ENCODE measurements at regions of chr5 and their contacts with region 1.

Region 1: GRCh38 chr5:115841382-115842088 is at the starts of genes AP3S1 and ATG12:
- DNase-seq: peak; percentile 95
- H3K4me3 ChIP-seq: peak within 1 kb of the TSS; percentile 66 to 90 (median 67)
- H3K27ac ChIP-seq: peak within 1 kb of the TSS; percentile 86
- H3K4me1 ChIP-seq: peaks cover 41% of the 10 kb centered on the region
- H3K27me3 ChIP-seq: no peaks in the 10 kb centered on the region
- CTCF ChIP-seq: no peak
- POLR2A ChIP-seq: peak; percentile 91
- total RNA-seq, gene AP3S1: 81.2 and 85.7 TPM in 2 replicates
- total RNA-seq, gene ATG12: 50.3 and 62.0 TPM in 2 replicates

Region 2: GRCh38 chr5:115169487-115170133 is 671.9 kb before region 1 on chr5 and contains the start of gene TRIM36:
- CTCF ChIA-PET with region 1: no interaction called
- POLR2A ChIA-PET with region 1: no interaction called
- dilution Hi-C with region 1: no loop called
- intact Hi-C with region 1: loop called (anchors 10 kb)
- DNase-seq: peak; percentile 90
- H3K4me3 ChIP-seq: peak within 1 kb of the TSS; percentile 14 to 61 (median 24)
- H3K27ac ChIP-seq: no peak within 1 kb of the TSS
- H3K4me1 ChIP-seq: peaks cover 11% of the 10 kb centered on the region
- H3K27me3 ChIP-seq: peaks cover 22 to 50% of the 10 kb centered on the region in 2 experiments
- CTCF ChIP-seq: peak in 1 of 2 donors; percentile 24
- POLR2A ChIP-seq: no peak
- total RNA-seq, gene TRIM36: 0.69 and 1.2 TPM in 2 replicates

Region 3: DNA sequence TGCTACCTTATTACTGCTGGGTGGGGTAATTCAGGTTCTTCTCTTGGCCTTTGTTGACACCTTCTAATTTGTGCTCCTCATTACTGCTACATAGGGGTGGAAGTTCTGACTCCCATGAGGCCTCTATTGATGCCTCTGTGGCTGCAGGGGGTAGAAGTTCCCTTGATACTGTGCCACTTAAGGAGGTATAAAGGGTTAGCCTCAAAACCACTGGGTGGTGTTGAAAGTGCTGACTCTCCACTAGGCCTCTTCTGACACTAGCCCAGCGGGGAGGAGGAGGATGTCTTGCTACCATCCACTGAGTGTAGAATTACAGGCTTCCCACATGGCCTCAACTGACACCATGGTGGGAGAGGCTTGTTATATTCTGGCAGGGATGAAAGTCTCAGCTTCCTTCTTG is 508.4 kb before region 1 on chr5:
- CTCF ChIA-PET with region 1: no interaction called
- POLR2A ChIA-PET with region 1: no interaction called
- dilution Hi-C with region 1: no loop called
- intact Hi-C with region 1: no loop called
- DNase-seq: no peak
- H3K4me3 ChIP-seq: no peak overlapping the region
- H3K27ac ChIP-seq: no peak overlapping the region
- H3K4me1 ChIP-seq: no peaks in the 10 kb centered on the region
- H3K27me3 ChIP-seq: no peaks in the 10 kb centered on the region
- CTCF ChIP-seq: no peak
- POLR2A ChIP-seq: no peak

Region 4: DNA sequence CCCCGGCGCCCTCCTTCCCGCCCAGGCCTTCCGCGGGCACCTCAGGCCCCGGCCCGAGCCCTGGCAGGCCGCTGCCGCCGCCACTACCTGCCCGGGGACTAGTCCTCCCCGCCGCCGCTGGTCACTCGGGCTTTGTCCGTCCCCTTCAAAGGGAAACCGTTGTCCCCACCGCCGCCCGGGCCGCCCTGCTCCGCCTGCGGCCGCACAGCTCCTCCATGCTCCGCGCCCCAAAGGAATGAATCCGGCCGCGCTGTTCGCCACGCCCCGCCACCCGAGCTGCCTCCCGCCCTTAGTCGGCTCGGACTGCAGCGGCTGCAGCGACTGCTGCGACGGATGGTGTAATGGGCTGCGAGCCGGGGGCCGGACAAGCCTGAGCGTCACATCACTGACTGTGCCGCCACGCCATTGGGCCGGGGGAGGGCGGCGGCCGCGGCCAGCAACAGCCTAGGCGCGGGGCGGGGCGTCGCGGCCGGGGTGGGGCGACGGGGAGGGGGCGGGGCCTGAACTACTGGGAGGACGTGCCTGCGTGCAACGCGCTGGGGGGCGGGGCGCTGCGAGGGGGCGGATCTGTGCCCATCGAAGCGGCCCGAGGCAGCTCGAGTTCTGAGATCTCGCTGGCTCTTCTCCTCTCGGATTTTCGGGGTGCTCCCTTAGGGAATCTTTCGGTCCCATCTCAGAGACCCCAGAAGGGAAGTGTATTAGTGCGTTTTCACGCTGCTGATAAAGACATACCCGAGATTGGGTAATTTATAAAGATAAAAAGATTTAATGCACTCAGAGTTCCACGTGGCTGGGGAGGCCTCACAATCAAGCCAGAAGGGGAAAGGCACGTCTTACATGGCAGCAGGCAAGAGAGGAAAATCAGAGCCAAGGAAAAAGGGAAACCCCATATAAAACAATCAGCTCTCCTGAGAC is 296.8 kb before region 1 on chr5 and contains the start of gene FEM1C:
- CTCF ChIA-PET with region 1: no interaction called
- POLR2A ChIA-PET with region 1: no interaction called
- dilution Hi-C with region 1: no loop called
- intact Hi-C with region 1: loop called (anchors 5 kb)
- DNase-seq: peak; percentile 98
- H3K4me3 ChIP-seq: peak within 1 kb of the TSS; percentile 90 to 99 (median 97)
- H3K27ac ChIP-seq: peak within 1 kb of the TSS; percentile 89
- H3K4me1 ChIP-seq: peaks cover 25% of the 10 kb centered on the region
- H3K27me3 ChIP-seq: no peaks in the 10 kb centered on the region
- CTCF ChIP-seq: no peak
- POLR2A ChIP-seq: peak; percentile 92
- total RNA-seq, gene FEM1C: 16.0 and 16.7 TPM in 2 replicates

Region 5: GRCh38 chr5:115816226-115817081 is 25.1 kb before region 1 on chr5 and contains the start of gene CDO1:
- CTCF ChIA-PET with region 1: interaction called, 4 read pairs
- POLR2A ChIA-PET with region 1: interaction called, 4 read pairs
- dilution Hi-C with region 1: no loop called
- intact Hi-C with region 1: loop called (anchors 2 kb)
- DNase-seq: peak; percentile 53
- H3K4me3 ChIP-seq: peak within 1 kb of the TSS; percentile 6 to 40 (median 24)
- H3K27ac ChIP-seq: no peak within 1 kb of the TSS
- H3K4me1 ChIP-seq: peaks cover 6% of the 10 kb centered on the region
- H3K27me3 ChIP-seq: peaks cover 27 to 38% of the 10 kb centered on the region in 2 experiments
- CTCF ChIP-seq: no peak
- POLR2A ChIP-seq: no peak
- total RNA-seq, gene CDO1: 1.3 and 1.7 TPM in 2 replicates

Region 6: GRCh38 chr5:115962503-115963402 is 121.2 kb after region 1 on chr5:
- CTCF ChIA-PET with region 1: no interaction called
- POLR2A ChIA-PET with region 1: no interaction called
- dilution Hi-C with region 1: no loop called
- intact Hi-C with region 1: loop called (anchors 5 kb)
- DNase-seq: peak; percentile 43
- H3K4me3 ChIP-seq: peak overlapping the region; percentile 12 to 48 (median 32)
- H3K27ac ChIP-seq: no peak overlapping the region
- H3K4me1 ChIP-seq: peaks cover 11% of the 10 kb centered on the region
- H3K27me3 ChIP-seq: peaks cover 3 to 40% of the 10 kb centered on the region in 2 experiments
- CTCF ChIP-seq: peak in 1 of 2 donors; percentile 9
- POLR2A ChIP-seq: no peak

Region 7: DNA sequence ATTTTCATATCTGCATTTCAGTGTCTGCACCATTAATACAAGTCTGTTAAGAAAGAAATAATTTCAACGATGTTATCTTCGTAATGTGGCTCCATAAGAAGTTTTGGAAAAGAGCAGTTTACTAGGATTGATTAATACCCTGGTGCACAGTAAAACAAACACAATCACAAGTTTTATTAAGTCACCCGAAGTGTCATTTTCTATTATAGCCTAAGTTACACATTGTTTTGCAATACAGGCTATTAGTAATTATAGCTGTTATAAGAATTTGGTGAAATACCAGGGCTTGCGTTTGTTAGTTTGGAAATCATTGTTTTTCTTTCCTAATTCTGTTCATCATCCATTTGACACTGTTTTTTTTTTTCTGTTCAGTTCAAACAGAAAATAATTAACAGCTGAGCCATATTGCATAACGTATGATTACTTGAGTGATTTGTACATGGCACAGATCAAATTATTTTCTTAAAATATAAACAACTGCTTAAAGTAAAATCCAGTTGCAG is 151.4 kb after region 1 on chr5:
- CTCF ChIA-PET with region 1: no interaction called
- POLR2A ChIA-PET with region 1: no interaction called
- dilution Hi-C with region 1: no loop called
- intact Hi-C with region 1: no loop called
- DNase-seq: no peak
- H3K4me3 ChIP-seq: no peak overlapping the region
- H3K27ac ChIP-seq: no peak overlapping the region
- H3K4me1 ChIP-seq: peaks cover under 1% of the 10 kb centered on the region
- H3K27me3 ChIP-seq: no peaks in the 10 kb centered on the region
- CTCF ChIP-seq: no peak
- POLR2A ChIP-seq: no peak

Region 8: DNA sequence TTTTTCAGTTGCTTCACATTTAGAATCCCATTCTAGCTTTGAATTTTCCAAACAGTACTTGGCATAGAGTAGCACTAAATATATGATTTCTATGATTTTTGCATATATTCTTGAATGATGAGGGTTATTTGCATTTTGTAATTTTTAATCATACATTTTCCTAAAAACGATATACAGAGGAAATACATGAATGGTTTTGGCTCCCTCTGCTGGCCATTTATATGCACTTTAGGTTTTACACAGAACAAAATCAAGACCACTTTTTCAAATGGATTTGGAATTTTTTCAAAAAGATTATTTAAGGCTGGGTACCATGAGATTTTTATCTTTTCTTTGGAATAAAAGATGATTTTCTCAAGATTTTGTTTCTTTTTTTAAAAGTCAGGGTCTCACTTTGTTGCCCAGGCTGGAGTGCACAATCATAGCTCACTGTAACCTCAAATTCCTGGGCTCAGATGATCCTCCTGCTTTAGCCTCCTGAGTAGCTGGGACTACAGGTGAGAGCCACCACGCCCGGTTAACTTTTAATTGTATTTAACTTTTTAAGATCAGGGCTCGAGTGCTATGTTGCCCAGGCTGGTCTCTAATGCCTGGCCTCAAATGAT is 226.6 kb after region 1 on chr5:
- CTCF ChIA-PET with region 1: interaction called, 8 read pairs
- POLR2A ChIA-PET with region 1: no interaction called
- dilution Hi-C with region 1: no loop called
- intact Hi-C with region 1: loop called (anchors 1 kb)
- DNase-seq: peak; percentile 61
- H3K4me3 ChIP-seq: no peak overlapping the region
- H3K27ac ChIP-seq: no peak overlapping the region
- H3K4me1 ChIP-seq: no peaks in the 10 kb centered on the region
- H3K27me3 ChIP-seq: peaks cover 0 to 7% of the 10 kb centered on the region in 2 experiments
- CTCF ChIP-seq: peak; percentile 43 to 51
- POLR2A ChIP-seq: no peak

Region 9: GRCh38 chr5:116191629-116192028 is 350.1 kb after region 1 on chr5:
- CTCF ChIA-PET with region 1: no interaction called
- POLR2A ChIA-PET with region 1: no interaction called
- dilution Hi-C with region 1: no loop called
- intact Hi-C with region 1: no loop called
- DNase-seq: no peak
- H3K4me3 ChIP-seq: no peak overlapping the region
- H3K27ac ChIP-seq: no peak overlapping the region
- H3K4me1 ChIP-seq: no peaks in the 10 kb centered on the region
- H3K27me3 ChIP-seq: no peaks in the 10 kb centered on the region
- CTCF ChIP-seq: no peak
- POLR2A ChIP-seq: no peak